CD4-positive, alpha-beta memory T cell (primary cell): ENCODE measurements at regions of chr1 and their contacts with region 1.

Region 1: DNA sequence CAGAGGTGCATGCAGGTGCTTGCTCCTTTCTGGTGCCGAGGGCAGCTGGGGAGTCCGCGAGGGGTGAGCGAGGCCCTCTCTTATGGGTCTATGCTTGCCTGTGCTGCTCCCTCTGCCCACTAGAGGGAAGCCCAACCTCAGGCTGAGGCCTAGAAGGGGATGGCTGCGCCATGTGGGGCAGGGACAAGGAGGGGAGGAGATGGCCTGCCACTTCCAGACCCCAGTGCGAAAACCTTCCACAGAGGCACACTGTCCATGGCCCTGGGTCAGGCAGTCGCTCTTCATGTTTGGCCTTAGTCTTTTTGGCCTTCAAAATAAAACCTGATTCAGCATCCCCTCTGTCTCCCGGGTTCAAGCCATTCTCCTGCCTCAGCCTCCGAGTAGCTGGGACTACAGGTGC is 14.0 kb downstream of the RHBG start:
- DNase-seq: peak; percentile 37 to 58 (median 44)
- H3K4me3 ChIP-seq: no peak overlapping the region
- H3K4me3 Mint-ChIP-seq: no peak overlapping the region
- H3K27ac ChIP-seq: no peak overlapping the region
- H3K27ac Mint-ChIP-seq: no peak overlapping the region
- H3K4me1 ChIP-seq: peaks cover 6% of the 10 kb centered on the region
- H3K4me1 Mint-ChIP-seq: peaks cover 4 to 14% (median 7%) of the 10 kb centered on the region in 4 donors
- H3K27me3 ChIP-seq: no peaks in the 10 kb centered on the region
- H3K27me3 Mint-ChIP-seq: peaks cover 7 to 12% of the 10 kb centered on the region in 2 donors

Region 2: GRCh38 chr1:156020292-156021089 is 362.5 kb before region 1 on chr1 and contains the start of gene SSR2:
- CTCF ChIA-PET with region 1: no interaction called
- POLR2A ChIA-PET with region 1: no interaction called
- intact Hi-C with region 1: no loop called
- DNase-seq: peak; percentile 85 to 92 (median 87)
- H3K4me3 ChIP-seq: peak within 1 kb of the TSS; percentile 78 to 81
- H3K4me3 Mint-ChIP-seq: peak within 1 kb of the TSS; percentile 96 to 99 (median 99)
- H3K27ac ChIP-seq: peak within 1 kb of the TSS; percentile 77
- H3K27ac Mint-ChIP-seq: peak within 1 kb of the TSS; percentile 82 to 99 (median 98)
- H3K4me1 ChIP-seq: peaks cover 17% of the 10 kb centered on the region
- H3K4me1 Mint-ChIP-seq: peaks cover 20 to 44% (median 30%) of the 10 kb centered on the region in 4 donors
- H3K27me3 ChIP-seq: no peaks in the 10 kb centered on the region
- H3K27me3 Mint-ChIP-seq: peaks cover 0 to 2% of the 10 kb centered on the region in 2 donors
- total RNA-seq, gene SSR2: 252 to 276 TPM

Region 3: DNA sequence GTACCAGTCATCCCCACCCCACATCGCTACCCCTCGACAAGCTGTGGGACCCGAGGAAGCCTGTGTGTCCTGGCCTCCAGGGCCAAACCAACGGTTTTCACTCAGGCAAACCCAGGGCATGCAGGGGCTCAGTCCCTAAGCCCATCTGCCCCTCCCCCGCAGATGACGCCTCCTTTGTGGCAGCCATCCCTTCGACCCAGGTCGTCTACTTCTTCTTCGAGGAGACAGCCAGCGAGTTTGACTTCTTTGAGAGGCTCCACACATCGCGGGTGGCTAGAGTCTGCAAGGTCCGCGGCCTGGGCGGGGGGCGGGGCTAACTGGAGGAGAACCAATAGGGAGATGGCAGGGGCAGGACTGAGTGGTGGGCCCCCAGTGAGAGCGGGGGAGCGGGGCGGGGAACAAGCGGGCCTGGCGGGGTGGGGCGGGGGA is 222.3 kb before region 1 on chr1:
- CTCF ChIA-PET with region 1: no interaction called
- POLR2A ChIA-PET with region 1: no interaction called
- intact Hi-C with region 1: no loop called
- DNase-seq: peak in 4 of 5 donors; percentile 37 to 72 (median 40)
- H3K4me3 ChIP-seq: peak overlapping the region in 1 of 2 donors; percentile 58
- H3K4me3 Mint-ChIP-seq: peak overlapping the region; percentile 67 to 83 (median 78)
- H3K27ac ChIP-seq: no peak overlapping the region
- H3K27ac Mint-ChIP-seq: peak overlapping the region in 6 of 7 donors; percentile 15 to 88 (median 54)
- H3K4me1 ChIP-seq: peaks cover 13% of the 10 kb centered on the region
- H3K4me1 Mint-ChIP-seq: peaks cover 6 to 52% (median 17%) of the 10 kb centered on the region in 4 donors
- H3K27me3 ChIP-seq: no peaks in the 10 kb centered on the region
- H3K27me3 Mint-ChIP-seq: no peaks in the 10 kb centered on the region

Region 4: GRCh38 chr1:156262461-156263287 is 120.3 kb before region 1 on chr1:
- CTCF ChIA-PET with region 1: no interaction called
- POLR2A ChIA-PET with region 1: no interaction called
- intact Hi-C with region 1: no loop called
- DNase-seq: no peak
- H3K4me3 ChIP-seq: no peak overlapping the region
- H3K4me3 Mint-ChIP-seq: no peak overlapping the region
- H3K27ac ChIP-seq: no peak overlapping the region
- H3K27ac Mint-ChIP-seq: peak overlapping the region in 2 of 7 donors; percentile 31 to 36
- H3K4me1 ChIP-seq: no peaks in the 10 kb centered on the region
- H3K4me1 Mint-ChIP-seq: peaks cover 0 to 4% (median 2%) of the 10 kb centered on the region in 4 donors
- H3K27me3 ChIP-seq: no peaks in the 10 kb centered on the region
- H3K27me3 Mint-ChIP-seq: no peaks in the 10 kb centered on the region

Region 5: DNA sequence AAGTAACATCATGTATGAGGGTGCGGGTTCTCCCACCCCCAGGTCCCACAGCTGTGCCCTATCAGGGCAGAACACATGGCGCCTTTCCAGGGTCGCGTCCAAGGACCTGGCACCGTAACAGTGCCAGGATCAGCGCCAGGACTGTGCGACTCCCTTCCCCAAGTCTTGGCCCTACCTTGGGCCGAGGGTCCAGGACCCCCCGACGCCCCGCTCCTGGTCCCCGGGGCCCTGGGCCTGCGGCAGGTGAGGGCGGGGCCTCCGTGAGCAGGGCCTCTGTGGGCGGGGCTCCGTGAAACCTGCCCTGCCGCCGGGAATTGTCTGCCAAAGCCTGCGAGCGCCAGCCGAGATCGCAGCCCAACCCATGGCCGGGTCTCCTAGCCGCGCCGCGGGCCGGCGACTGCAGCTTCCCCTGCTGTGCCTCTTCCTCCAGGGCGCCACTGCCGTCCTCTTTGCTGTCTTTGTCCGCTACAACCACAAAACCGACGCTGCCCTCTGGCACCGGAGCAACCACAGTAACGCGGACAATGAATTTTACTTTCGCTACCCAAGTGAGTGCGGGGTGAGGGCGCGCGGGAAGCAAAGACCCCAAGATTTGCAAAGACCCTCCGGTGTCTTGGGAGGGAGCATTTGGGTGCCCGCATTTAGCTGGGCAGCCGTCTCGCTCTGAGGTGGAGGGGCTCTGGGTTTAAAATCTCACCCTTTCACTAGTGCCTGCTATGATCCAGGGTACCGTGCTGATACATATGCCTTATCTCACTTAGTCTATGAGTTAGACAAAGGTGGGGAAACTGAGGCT is 13.9 kb before region 1 on chr1 and contains the start of gene RHBG:
- CTCF ChIA-PET with region 1: interaction called, 38 read pairs
- POLR2A ChIA-PET with region 1: no interaction called
- intact Hi-C with region 1: no loop called
- DNase-seq: peak in 1 of 5 donors; percentile 19
- H3K4me3 ChIP-seq: no peak within 1 kb of the TSS
- H3K4me3 Mint-ChIP-seq: peak within 1 kb of the TSS; percentile 44 to 83 (median 68)
- H3K27ac ChIP-seq: no peak within 1 kb of the TSS
- H3K27ac Mint-ChIP-seq: no peak within 1 kb of the TSS
- H3K4me1 ChIP-seq: peaks cover 8% of the 10 kb centered on the region
- H3K4me1 Mint-ChIP-seq: peaks cover 1 to 6% (median 4%) of the 10 kb centered on the region in 4 donors
- H3K27me3 ChIP-seq: peaks cover 22% of the 10 kb centered on the region
- H3K27me3 Mint-ChIP-seq: peaks cover 25 to 51% of the 10 kb centered on the region in 2 donors
- total RNA-seq, gene RHBG: not detected

Region 6: GRCh38 chr1:156414461-156415064 is 31.5 kb after region 1 on chr1:
- CTCF ChIA-PET with region 1: interaction called, 25 read pairs
- POLR2A ChIA-PET with region 1: interaction called, 5 read pairs
- intact Hi-C with region 1: no loop called
- DNase-seq: no peak
- H3K4me3 ChIP-seq: no peak overlapping the region
- H3K4me3 Mint-ChIP-seq: no peak overlapping the region
- H3K27ac ChIP-seq: no peak overlapping the region
- H3K27ac Mint-ChIP-seq: no peak overlapping the region
- H3K4me1 ChIP-seq: peaks cover 4% of the 10 kb centered on the region
- H3K4me1 Mint-ChIP-seq: peaks cover 3 to 7% (median 6%) of the 10 kb centered on the region in 4 donors
- H3K27me3 ChIP-seq: peaks cover 8% of the 10 kb centered on the region
- H3K27me3 Mint-ChIP-seq: peaks cover 23 to 38% of the 10 kb centered on the region in 2 donors

Region 7: GRCh38 chr1:156436142-156437036 is 53.4 kb after region 1 on chr1:
- CTCF ChIA-PET with region 1: interaction called, 73 read pairs
- POLR2A ChIA-PET with region 1: interaction called, 5 read pairs
- intact Hi-C with region 1: no loop called
- DNase-seq: no peak
- H3K4me3 ChIP-seq: no peak overlapping the region
- H3K4me3 Mint-ChIP-seq: peak overlapping the region; percentile 41 to 88 (median 69)
- H3K27ac ChIP-seq: no peak overlapping the region
- H3K27ac Mint-ChIP-seq: no peak overlapping the region
- H3K4me1 ChIP-seq: peaks cover 36% of the 10 kb centered on the region
- H3K4me1 Mint-ChIP-seq: peaks cover 18 to 35% (median 23%) of the 10 kb centered on the region in 4 donors
- H3K27me3 ChIP-seq: peaks cover 86% of the 10 kb centered on the region
- H3K27me3 Mint-ChIP-seq: peaks cover 80% of the 10 kb centered on the region in 2 donors

Region 8: DNA sequence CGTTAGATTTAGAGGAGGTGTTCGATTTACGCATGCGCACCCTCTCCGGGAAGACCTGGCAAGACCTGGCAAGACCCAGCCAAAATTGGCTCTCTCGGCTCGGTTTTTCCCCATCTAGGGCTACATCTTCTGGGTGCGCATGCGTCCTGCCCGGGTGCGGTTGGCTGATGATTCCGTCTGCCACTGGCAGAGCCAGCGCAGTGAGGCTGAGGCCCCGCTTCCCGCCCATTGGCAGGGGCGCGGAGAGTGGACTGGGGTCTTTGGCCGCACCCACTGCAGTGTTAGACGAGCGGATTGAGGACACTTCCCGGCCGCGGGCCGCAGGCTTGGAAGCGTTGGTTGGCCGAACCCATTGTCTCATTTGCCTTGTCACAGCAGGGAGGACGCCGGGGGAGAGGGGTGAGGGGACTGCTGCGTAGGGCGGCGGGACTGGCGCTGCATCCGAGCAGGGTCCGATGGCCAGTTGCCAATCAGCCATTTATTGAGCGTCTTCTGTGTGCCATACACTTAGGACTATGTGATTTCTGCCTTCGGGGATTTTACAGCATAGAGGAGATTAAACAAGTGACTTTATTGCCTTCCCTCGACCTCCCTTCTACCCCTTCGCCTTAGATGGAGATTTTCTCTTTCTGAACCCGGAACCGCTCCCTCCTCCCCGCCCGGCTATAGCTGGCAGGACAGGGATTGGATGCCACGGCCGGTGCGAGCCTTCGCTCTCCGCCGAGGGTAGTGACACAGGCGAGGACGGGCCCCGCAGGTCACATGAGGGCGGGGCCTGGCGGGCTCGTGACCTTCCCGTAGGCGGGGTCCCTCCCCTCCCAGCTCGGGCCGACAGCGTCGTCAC is 73.8 kb after region 1 on chr1:
- CTCF ChIA-PET with region 1: interaction called, 22 read pairs
- POLR2A ChIA-PET with region 1: interaction called, 6 read pairs
- intact Hi-C with region 1: no loop called
- DNase-seq: peak; percentile 95 to 99 (median 97)
- H3K4me3 ChIP-seq: peak overlapping the region; percentile 61 to 81
- H3K4me3 Mint-ChIP-seq: peak overlapping the region; percentile 92 to 97 (median 94)
- H3K27ac ChIP-seq: peak overlapping the region; percentile 99
- H3K27ac Mint-ChIP-seq: peak overlapping the region; percentile 98 to 100 (median 99)
- H3K4me1 ChIP-seq: peaks cover 17% of the 10 kb centered on the region
- H3K4me1 Mint-ChIP-seq: peaks cover 7 to 26% (median 12%) of the 10 kb centered on the region in 4 donors
- H3K27me3 ChIP-seq: no peaks in the 10 kb centered on the region
- H3K27me3 Mint-ChIP-seq: no peaks in the 10 kb centered on the region

Region 9: GRCh38 chr1:156601122-156601830 is 218.3 kb after region 1 on chr1 and contains the start of gene GPATCH4:
- CTCF ChIA-PET with region 1: interaction called, 29 read pairs
- POLR2A ChIA-PET with region 1: interaction called, 3 read pairs
- intact Hi-C with region 1: no loop called
- DNase-seq: peak; percentile 75 to 82 (median 76)
- H3K4me3 ChIP-seq: peak within 1 kb of the TSS; percentile 82 to 83
- H3K4me3 Mint-ChIP-seq: peak within 1 kb of the TSS; percentile 90 to 100 (median 99)
- H3K27ac ChIP-seq: peak within 1 kb of the TSS; percentile 83
- H3K27ac Mint-ChIP-seq: peak within 1 kb of the TSS; percentile 83 to 100 (median 98)
- H3K4me1 ChIP-seq: peaks cover 30% of the 10 kb centered on the region
- H3K4me1 Mint-ChIP-seq: peaks cover 13 to 37% (median 26%) of the 10 kb centered on the region in 4 donors
- H3K27me3 ChIP-seq: no peaks in the 10 kb centered on the region
- H3K27me3 Mint-ChIP-seq: no peaks in the 10 kb centered on the region
- total RNA-seq, gene GPATCH4: 26.9 to 30.7 TPM

Region 10: GRCh38 chr1:156751758-156752757 is 369.0 kb after region 1 on chr1:
- CTCF ChIA-PET with region 1: no interaction called
- POLR2A ChIA-PET with region 1: no interaction called
- intact Hi-C with region 1: no loop called
- DNase-seq: peak; percentile 91 to 98 (median 93)
- H3K4me3 ChIP-seq: peak overlapping the region; percentile 42 to 88
- H3K4me3 Mint-ChIP-seq: peak overlapping the region; percentile 87 to 97 (median 92)
- H3K27ac ChIP-seq: peak overlapping the region; percentile 82
- H3K27ac Mint-ChIP-seq: peak overlapping the region; percentile 84 to 95 (median 92)
- H3K4me1 ChIP-seq: peaks cover 43% of the 10 kb centered on the region
- H3K4me1 Mint-ChIP-seq: peaks cover 36 to 61% (median 46%) of the 10 kb centered on the region in 4 donors
- H3K27me3 ChIP-seq: no peaks in the 10 kb centered on the region
- H3K27me3 Mint-ChIP-seq: no peaks in the 10 kb centered on the region